Transverse colon (tissue), 4 donors: ENCODE measurements at regions of chr3 and their contacts with region 1.

Region 1: DNA sequence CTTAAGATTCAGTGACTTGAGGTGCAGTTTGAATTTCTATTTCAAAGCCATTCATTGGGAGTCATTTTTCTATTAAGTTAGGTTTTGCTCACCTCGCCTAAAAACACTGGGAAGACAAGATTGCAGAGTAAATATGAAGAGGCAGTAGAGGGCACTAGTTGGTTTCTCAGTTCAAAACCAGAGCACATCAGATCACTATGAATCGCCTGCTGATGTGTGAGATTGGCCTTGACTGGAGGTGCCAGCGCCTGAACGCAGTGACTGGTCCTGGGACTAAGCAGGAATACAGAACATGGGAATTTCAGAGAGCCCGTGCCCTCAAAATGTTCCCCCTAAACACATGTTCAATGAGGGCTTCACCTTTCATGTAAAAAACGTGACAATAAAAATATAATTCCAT is 229.0 kb downstream of the ITPR1 start:
- DNase-seq: peak; percentile 57
- H3K4me3 ChIP-seq: no peak overlapping the region
- H3K27ac ChIP-seq: peak overlapping the region; percentile 58 to 79 (median 67)
- H3K4me1 ChIP-seq: peaks cover 18 to 48% (median 23%) of the 10 kb centered on the region in 4 donors
- H3K27me3 ChIP-seq: no peaks in the 10 kb centered on the region
- CTCF ChIP-seq: peak; percentile 32 to 58 (median 38)
- EP300 ChIP-seq: no peak
- POLR2A ChIP-seq: no peak

Region 2: GRCh38 chr3:4776980-4777581 is 55.0 kb after region 1 on chr3:
- in situ Hi-C with region 1: no loop called
- intact Hi-C with region 1: loop called (anchors 10 kb)
- DNase-seq: peak; percentile 48
- H3K4me3 ChIP-seq: no peak overlapping the region
- H3K27ac ChIP-seq: peak overlapping the region; percentile 72 to 78 (median 74)
- H3K4me1 ChIP-seq: peaks cover 20 to 53% (median 30%) of the 10 kb centered on the region in 4 donors
- H3K27me3 ChIP-seq: no peaks in the 10 kb centered on the region
- CTCF ChIP-seq: no peak
- EP300 ChIP-seq: no peak
- POLR2A ChIP-seq: no peak

Region 3: DNA sequence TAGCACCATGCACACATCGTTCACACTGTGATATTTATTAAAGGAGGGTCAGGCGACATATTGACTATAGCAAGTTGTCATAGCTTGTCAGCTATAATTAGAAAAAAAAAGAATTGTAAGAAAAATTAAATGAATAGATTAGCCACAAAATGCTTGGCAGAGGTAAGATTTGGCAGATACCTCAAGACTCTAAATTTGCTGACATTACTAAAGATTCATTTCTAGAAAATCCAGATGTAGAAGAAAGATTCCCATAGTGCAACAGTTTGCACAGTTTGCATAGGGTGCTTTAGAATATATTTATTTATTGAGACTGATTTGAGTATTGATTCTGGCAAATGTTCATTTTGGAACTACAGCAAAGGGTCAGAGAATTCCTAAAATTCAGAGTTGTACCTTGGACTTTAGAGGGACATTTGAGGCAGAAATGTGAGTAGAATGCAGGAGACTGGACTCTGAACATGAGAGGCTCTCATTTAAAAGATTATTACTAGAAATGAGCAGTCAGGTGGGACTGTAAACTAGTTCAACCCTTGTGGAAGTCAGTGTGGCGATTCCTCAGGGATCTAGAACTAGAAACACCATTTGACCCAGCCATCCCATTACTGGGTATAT is 155.2 kb after region 1 on chr3:
- in situ Hi-C with region 1: loop called in 1 of 4 experiments (anchors 10 kb)
- intact Hi-C with region 1: no loop called
- DNase-seq: no peak
- H3K4me3 ChIP-seq: no peak overlapping the region
- H3K27ac ChIP-seq: no peak overlapping the region
- H3K4me1 ChIP-seq: no peaks in the 10 kb centered on the region
- H3K27me3 ChIP-seq: no peaks in the 10 kb centered on the region
- CTCF ChIP-seq: no peak
- EP300 ChIP-seq: no peak
- POLR2A ChIP-seq: no peak

Region 4: DNA sequence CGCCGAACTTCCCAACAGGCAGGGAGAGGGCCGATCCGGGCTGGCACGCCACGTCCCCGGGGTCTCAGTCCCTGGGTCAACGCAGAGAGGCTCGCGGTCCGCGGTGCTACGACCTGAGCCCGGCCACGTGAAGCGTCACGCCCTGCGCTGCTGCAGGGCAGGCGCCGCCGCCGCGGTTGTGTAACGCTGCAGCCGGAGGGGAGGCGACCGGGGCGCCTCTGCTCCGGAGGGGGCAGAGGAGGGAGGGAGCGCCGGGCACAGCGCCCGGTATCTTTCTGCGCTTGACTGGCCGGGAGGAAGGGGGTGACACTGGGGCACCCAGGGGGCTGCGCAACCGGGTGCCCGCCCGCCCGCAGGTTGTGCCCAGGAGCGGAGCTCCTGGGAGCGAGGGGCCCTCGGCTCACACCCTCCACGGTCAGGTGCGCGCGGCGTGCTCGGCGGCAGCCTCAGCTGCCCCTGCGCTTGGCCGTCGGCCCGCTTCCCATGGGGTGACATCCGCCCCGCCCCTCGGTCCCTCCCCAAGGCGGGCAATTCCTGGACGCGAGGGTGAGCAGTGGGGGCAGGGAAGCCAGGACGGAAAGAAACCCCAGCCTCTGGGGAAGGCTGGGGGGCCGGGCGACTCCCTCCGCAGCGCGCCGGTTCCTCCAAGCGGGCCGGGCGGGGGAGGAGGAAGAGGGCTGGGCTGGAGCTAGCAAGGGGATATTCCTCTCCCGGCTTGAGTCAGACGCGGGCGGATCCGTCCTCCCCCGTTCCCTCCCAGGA is 256.3 kb after region 1 on chr3:
- in situ Hi-C with region 1: loop called in 1 of 4 experiments (anchors 10 kb)
- intact Hi-C with region 1: loop called (anchors 10 kb)
- DNase-seq: peak; percentile 95
- H3K4me3 ChIP-seq: peak overlapping the region; percentile 42 to 73 (median 64)
- H3K27ac ChIP-seq: peak overlapping the region; percentile 99 to 100 (median 100)
- H3K4me1 ChIP-seq: peaks cover 14 to 44% (median 40%) of the 10 kb centered on the region in 4 donors
- H3K27me3 ChIP-seq: no peaks in the 10 kb centered on the region
- CTCF ChIP-seq: no peak
- EP300 ChIP-seq: peak; percentile 91
- POLR2A ChIP-seq: peak; percentile 89

Region 5: GRCh38 chr3:4986782-4987537 is 264.9 kb after region 1 on chr3:
- in situ Hi-C with region 1: no loop called
- intact Hi-C with region 1: loop called (anchors 10 kb)
- DNase-seq: peak; percentile 97
- H3K4me3 ChIP-seq: peak overlapping the region; percentile 8 to 43 (median 32)
- H3K27ac ChIP-seq: peak overlapping the region; percentile 99 to 100 (median 100)
- H3K4me1 ChIP-seq: peaks cover 23 to 73% (median 54%) of the 10 kb centered on the region in 4 donors
- H3K27me3 ChIP-seq: no peaks in the 10 kb centered on the region
- CTCF ChIP-seq: no peak
- EP300 ChIP-seq: peak; percentile 96
- POLR2A ChIP-seq: peak; percentile 86

Region 6: DNA sequence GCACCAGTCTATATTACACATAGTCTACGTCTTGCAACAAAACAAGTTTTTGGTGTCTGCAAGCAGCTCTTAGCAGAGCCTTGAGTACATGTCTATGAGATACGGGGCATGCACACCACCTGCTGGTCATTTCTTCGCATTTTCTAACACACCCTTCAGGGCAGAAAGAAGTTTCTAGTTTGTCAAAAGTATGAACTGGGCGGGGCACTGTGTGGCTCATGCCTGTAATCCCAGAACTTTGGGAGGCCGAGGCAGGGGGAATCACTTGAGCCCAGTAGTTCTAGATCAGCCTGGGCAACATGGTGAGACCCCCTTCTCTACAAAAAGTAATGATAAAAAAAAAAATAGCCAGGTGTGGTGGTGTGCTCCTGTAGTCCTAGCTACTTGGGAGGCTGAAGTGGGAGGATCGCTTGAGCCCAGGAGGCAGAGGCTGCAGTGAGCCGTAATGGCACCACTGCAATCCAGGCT is 335.8 kb after region 1 on chr3:
- in situ Hi-C with region 1: loop called (anchors 5 to 25 kb)
- intact Hi-C with region 1: no loop called
- DNase-seq: peak; percentile 84
- H3K4me3 ChIP-seq: no peak overlapping the region
- H3K27ac ChIP-seq: no peak overlapping the region
- H3K4me1 ChIP-seq: peaks cover 0 to 20% (median 4%) of the 10 kb centered on the region in 4 donors
- H3K27me3 ChIP-seq: no peaks in the 10 kb centered on the region
- CTCF ChIP-seq: peak; percentile 70 to 88 (median 76)
- EP300 ChIP-seq: no peak
- POLR2A ChIP-seq: no peak